ENCODE measurements at regions of chr15 and their contacts with region 1.

Region 1: DNA sequence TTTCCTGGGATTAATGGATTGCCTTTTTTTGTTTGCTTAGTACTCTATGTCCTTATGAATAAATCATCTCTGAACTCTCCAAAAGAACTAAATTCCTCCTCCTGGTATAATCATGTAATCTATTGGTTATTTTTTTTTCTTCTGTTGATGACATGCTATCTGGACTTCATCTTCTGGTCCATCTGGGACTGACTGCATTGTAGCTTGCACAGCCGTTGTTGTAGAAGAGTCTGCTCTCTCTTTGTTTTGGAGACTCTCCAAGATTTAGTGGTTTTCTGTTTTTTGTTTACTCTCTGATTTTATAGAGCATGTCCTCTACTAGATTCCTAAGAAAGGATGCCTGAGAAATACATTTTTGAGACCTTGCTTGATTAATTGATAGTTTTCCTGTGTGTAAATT is 19.1 kb downstream of the IREB2 start:
- DNase-seq: peak; percentile 84
- ATAC-seq: peak; percentile 85
- H3K4me3 ChIP-seq: no peak overlapping the region
- H3K27ac ChIP-seq: peak overlapping the region; percentile 0; the same call in 1 of the 2 replicates
- H3K4me1 ChIP-seq: peaks cover 30% of the 10 kb centered on the region
- H3K27me3 ChIP-seq: no peaks in the 10 kb centered on the region
- CTCF ChIP-seq: no peak

Region 2: GRCh38 chr15:78155355-78155939 is 301.7 kb before region 1 on chr15:
- CTCF ChIA-PET with region 1: no interaction called
- POLR2A ChIA-PET with region 1: no interaction called
- intact Hi-C with region 1: loop called (anchors 5 kb)
- DNase-seq: no peak
- ATAC-seq: 0 out of 2 replicates have a peak, but pooled peaks have one; percentile 31
- H3K4me3 ChIP-seq: no peak overlapping the region
- H3K27ac ChIP-seq: no peak overlapping the region
- H3K4me1 ChIP-seq: peaks cover 20% of the 10 kb centered on the region; the same call in 1 of the 2 replicates
- H3K27me3 ChIP-seq: no peaks in the 10 kb centered on the region
- CTCF ChIP-seq: no peak

Region 3: GRCh38 chr15:78195735-78196201 is 261.3 kb before region 1 on chr15:
- CTCF ChIA-PET with region 1: no interaction called
- POLR2A ChIA-PET with region 1: no interaction called
- intact Hi-C with region 1: no loop called
- DNase-seq: peak; percentile 54
- ATAC-seq: peak; percentile 86
- H3K4me3 ChIP-seq: no peak overlapping the region
- H3K27ac ChIP-seq: no peak overlapping the region
- H3K4me1 ChIP-seq: no peaks in the 10 kb centered on the region
- H3K27me3 ChIP-seq: no peaks in the 10 kb centered on the region
- CTCF ChIP-seq: peak; percentile 90